Posterior cingulate gyrus (tissue), 11 donors: ENCODE measurements at regions of chr2 and their contacts with region 1.

Region 1: GRCh38 chr2:55617175-55618024 is at the start of gene PPP4R3B:
- DNase-seq: peak; percentile 98 to 100 (median 99)

Region 2: DNA sequence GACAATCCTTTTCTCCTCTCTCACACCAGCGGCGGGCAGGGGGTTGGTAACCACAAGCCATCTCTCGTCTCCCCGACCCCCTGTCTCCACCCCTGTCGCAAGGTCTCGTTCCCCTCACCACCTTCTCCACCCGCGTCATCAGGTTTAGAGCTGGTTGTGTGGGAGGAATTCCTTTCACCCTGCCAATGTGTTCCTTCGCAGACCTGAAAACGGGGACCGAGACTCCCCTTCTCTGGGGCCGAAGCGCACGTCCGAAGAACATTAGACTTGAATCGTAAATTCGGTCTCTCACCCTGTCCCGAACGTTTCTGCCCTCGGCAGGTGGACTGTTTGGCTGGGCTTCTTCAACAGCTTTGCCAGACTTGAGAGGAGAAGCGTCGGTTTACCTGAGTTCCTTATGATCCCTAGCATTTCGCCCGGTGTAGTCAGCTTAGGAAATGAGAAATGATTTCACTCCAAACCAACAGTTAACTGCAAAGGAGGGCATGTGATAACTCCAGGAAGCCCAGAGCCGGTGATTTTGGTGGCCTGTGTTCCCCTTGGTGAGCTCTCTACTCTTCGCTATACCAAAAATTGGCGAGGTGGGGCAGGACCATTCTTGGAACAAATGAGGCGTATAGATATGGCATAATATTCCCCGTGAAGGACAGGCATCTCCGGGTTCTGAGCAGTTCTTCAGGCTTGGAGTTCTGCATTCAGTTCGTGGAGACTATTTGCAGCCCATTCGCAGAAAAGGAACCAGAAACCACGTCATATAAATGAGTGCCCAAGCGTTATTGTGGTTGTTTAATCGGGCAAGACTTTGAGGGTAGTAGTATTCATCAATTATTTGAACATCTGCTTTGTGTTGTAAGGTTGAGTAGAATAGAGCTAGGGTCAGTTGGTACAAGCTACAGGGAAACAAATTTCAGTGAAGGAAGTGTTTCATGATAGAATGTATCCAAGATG is 97.2 kb before region 1 on chr2:
- intact Hi-C with region 1: loop called (anchors 2 kb)
- DNase-seq: peak in 6 of 10 donors; percentile 10 to 79 (median 26)

Region 3: GRCh38 chr2:55693181-55694134 is 76.1 kb after region 1 on chr2 and contains the start of gene PNPT1:
- intact Hi-C with region 1: loop called (anchors 5 kb)
- DNase-seq: peak; percentile 90 to 99 (median 95)